ENCODE measurements at regions of chr9 and their contacts with region 1.

Region 1: DNA sequence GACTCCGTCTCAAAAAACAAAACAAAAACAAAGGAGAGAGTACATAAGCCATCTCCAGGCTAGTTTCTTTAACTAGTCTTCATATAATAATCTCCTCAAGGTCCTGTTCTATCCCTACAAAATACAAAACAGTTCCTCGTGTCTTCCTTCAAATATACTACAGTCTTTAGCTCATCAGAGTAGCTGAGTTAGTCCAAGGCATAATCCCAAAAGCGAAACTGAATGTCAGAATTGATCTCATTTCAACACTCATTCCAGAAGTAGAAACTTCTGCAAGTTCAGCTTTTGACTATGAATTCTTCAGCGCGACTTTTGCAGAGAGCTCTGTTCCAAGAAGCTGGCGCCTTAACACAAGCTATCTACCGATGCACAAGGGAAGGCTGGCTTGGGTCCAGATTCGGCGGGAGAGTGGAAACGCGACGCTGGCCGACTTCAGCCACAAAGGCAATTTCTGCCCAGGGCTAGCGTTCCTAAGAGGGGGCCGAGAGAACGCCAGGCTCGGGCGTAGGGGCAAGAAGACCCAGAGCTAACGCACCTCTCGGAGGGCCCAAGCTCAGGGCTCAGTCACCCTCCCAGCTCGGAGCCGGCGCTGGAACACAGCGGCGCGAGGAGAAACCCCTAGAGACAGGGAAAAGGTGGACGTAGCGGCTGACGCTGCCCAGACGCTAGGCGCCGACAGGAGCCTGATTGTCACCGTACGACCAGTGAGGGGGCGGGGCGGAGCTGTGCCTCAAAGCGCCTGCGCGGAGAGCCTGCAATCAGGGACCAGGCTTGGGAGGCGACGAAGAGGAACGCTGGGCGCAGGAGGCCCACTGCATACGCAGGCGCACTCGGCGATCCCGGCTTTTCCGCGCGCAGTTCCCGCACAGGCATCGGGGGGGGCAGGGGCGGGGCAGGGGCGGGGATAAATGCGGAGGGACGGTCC is 469 bp upstream of the HSDL2 start:
- DNase-seq: peak; percentile 96
- ATAC-seq: peak; percentile 94
- H3K4me3 ChIP-seq: peak overlapping the region; percentile 86 to 92
- H3K27ac ChIP-seq: peak overlapping the region; percentile 92
- H3K4me1 ChIP-seq: peaks cover 7 to 12% of the 10 kb centered on the region in 2 experiments; a peak in 3 of 4 replicates
- H3K27me3 ChIP-seq: no peaks in the 10 kb centered on the region
- CTCF ChIP-seq: no peak
- POLR2A ChIP-seq: peak; percentile 85
- RAD21 ChIP-seq: no peak

Region 2: DNA sequence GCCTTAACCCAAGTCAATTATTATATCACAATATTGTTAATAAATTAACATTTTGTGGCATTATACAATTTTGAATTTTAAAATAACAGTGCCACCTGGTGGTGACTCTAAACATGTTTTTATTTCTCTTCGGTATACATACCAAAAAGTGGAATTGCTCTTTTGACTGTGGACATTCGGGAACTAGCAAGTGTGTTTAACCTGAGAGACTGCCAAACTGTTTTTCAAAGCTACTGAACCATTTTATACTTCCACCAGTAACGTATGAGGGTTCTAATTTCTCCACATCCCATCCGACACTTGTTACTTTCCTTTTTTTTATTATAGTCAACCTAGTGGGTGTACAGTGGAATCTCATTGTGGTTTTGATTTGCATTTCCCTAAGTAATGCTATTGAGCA is 17.8 kb before region 1 on chr9:
- CTCF ChIA-PET with region 1: interaction called, 11 read pairs
- POLR2A ChIA-PET with region 1: interaction called, 12 read pairs
- RAD21 ChIA-PET with region 1: no interaction called
- intact Hi-C with region 1: no loop called
- DNase-seq: peak; percentile 33
- ATAC-seq: 0 out of 2 replicates have a peak, but pooled peaks have one; percentile 50
- H3K4me3 ChIP-seq: no peak overlapping the region
- H3K27ac ChIP-seq: no peak overlapping the region
- H3K4me1 ChIP-seq: peaks cover 7 to 10% of the 10 kb centered on the region in 2 experiments; a peak in 3 of 4 replicates
- H3K27me3 ChIP-seq: no peaks in the 10 kb centered on the region
- CTCF ChIP-seq: peak in 2 of 3 experiments; percentile 58 to 86; a peak in 4 of 6 replicates
- POLR2A ChIP-seq: no peak
- RAD21 ChIP-seq: peak; percentile 86

Measured in HCT116 (cell line).